Endothelial cell of umbilical vein (primary cell): ENCODE measurements at regions of chr12 and their contacts with region 1.

Region 1: GRCh38 chr12:98532681-98533304 is 17.4 kb downstream of the TMPO start:
- DNase-seq: peak; percentile 51
- H3K4me3 ChIP-seq: no peak overlapping the region
- H3K27ac ChIP-seq: no peak overlapping the region
- H3K4me1 ChIP-seq: no peaks in the 10 kb centered on the region
- H3K27me3 ChIP-seq: no peaks in the 10 kb centered on the region
- CTCF ChIP-seq: peak; percentile 42 to 43
- POLR2A ChIP-seq: no peak

Region 2: DNA sequence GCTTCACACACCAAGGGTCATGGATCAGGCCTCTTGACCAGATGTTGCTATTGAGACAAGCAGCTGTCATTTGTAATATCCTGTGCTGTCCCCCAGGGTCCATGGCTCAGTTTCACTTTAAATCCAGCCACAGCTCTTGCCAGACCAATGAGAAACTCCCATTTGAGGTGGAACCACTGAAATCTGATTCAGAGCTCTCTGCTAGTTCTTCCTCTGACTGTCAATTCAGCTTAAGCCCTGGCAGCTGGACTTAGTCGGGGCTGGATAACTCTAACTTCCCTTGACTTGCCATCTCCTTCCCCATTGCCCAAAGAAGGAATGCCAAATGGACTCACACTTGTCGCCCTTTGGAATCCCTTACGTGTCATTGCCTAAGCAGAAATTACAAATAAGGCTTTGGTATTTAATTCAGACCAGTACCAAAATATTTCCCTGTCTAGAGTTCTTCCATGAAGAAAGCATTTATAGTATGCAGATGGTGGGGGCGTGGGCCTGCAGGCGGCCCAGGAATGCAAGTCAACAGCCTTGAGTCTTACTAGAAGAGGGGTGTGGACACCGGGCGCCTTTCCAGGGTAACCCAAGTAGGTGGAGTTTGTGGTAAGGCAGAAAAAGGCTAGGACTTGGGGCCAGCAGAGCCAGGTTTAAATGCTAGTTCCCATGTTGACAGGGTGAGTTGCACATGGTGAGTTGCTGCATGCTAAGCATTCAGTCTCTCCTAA is 114.3 kb before region 1 on chr12:
- CTCF ChIA-PET with region 1: interaction called, 39 read pairs
- POLR2A ChIA-PET with region 1: no interaction called
- dilution Hi-C with region 1: no loop called
- intact Hi-C with region 1: no loop called
- DNase-seq: peak; percentile 51
- H3K4me3 ChIP-seq: no peak overlapping the region
- H3K27ac ChIP-seq: no peak overlapping the region
- H3K4me1 ChIP-seq: peaks cover 2% of the 10 kb centered on the region
- H3K27me3 ChIP-seq: no peaks in the 10 kb centered on the region
- CTCF ChIP-seq: no peak
- POLR2A ChIP-seq: no peak

Region 3: DNA sequence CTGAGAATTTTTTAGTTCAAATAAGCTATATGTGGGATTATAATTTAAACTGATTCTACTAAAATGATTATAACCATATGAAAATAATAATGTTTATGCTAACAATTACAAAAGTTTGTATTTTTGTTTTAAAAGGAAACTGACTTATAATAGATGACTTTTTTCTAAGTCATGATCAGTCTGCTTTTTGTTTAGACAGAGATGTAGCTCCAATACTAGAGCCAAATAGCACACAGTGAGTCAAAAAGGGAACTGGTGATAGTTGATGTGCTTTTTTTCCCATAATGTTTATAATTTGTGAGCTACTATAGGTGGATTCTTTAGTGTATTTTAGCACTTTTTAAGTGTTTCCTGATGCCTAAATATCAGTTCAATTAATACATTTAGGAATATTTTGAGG is 10.9 kb after region 1 on chr12:
- CTCF ChIA-PET with region 1: interaction called, 14 read pairs
- POLR2A ChIA-PET with region 1: no interaction called
- dilution Hi-C with region 1: no loop called
- intact Hi-C with region 1: no loop called
- DNase-seq: no peak
- H3K4me3 ChIP-seq: no peak overlapping the region
- H3K27ac ChIP-seq: no peak overlapping the region
- H3K4me1 ChIP-seq: no peaks in the 10 kb centered on the region
- H3K27me3 ChIP-seq: no peaks in the 10 kb centered on the region
- CTCF ChIP-seq: no peak
- POLR2A ChIP-seq: no peak

Region 4: DNA sequence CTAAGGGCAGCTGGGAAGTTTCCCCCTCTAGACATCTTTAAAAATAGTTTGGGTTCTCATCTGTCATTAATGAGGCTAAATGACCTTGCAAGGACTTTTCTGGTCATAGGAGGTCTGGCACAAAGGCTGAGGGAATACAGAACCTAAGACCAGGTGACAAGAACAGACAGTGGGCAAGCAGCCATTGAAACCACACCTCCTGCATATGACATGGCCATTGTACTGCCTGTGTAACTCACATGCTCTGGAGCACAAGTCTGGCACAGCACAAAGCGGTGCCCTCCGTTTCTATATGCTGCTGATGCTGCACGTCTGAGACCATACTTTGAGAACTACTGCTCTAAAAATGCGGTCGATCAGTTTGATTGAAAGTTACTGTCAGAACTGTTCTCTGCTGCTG is 255.6 kb after region 1 on chr12:
- CTCF ChIA-PET with region 1: no interaction called
- POLR2A ChIA-PET with region 1: no interaction called
- dilution Hi-C with region 1: no loop called
- intact Hi-C with region 1: no loop called
- DNase-seq: no peak
- H3K4me3 ChIP-seq: no peak overlapping the region
- H3K27ac ChIP-seq: no peak overlapping the region
- H3K4me1 ChIP-seq: no peaks in the 10 kb centered on the region
- H3K27me3 ChIP-seq: no peaks in the 10 kb centered on the region
- CTCF ChIP-seq: no peak
- POLR2A ChIP-seq: no peak